Natural killer cell (primary cell): ENCODE measurements at regions of chr22 and their contacts with region 1.

Region 1: GRCh38 chr22:41403532-41404318 is 22.0 kb downstream of the TEF start:
- DNase-seq: peak; percentile 76 to 92
- ATAC-seq: peak; percentile 97 to 100 (median 100)
- H3K4me3 ChIP-seq: no peak overlapping the region
- H3K4me3 Mint-ChIP-seq: no peak overlapping the region
- H3K27ac ChIP-seq: no peak overlapping the region
- H3K27ac Mint-ChIP-seq: no peak overlapping the region
- H3K4me1 ChIP-seq: peaks cover 7% of the 10 kb centered on the region
- H3K4me1 Mint-ChIP-seq: peaks cover 5% of the 10 kb centered on the region in 2 donors
- H3K27me3 ChIP-seq: no peaks in the 10 kb centered on the region
- H3K27me3 Mint-ChIP-seq: peaks cover 0 to 2% of the 10 kb centered on the region in 2 donors
- CTCF ChIP-seq: peak; percentile 90

Region 2: GRCh38 chr22:41256254-41256897 is 147.3 kb before region 1 on chr22:
- intact Hi-C with region 1: no loop called
- DNase-seq: no peak
- ATAC-seq: no peak
- H3K4me3 ChIP-seq: no peak overlapping the region
- H3K4me3 Mint-ChIP-seq: no peak overlapping the region
- H3K27ac ChIP-seq: no peak overlapping the region
- H3K27ac Mint-ChIP-seq: no peak overlapping the region
- H3K4me1 ChIP-seq: no peaks in the 10 kb centered on the region
- H3K4me1 Mint-ChIP-seq: no peaks in the 10 kb centered on the region
- H3K27me3 ChIP-seq: no peaks in the 10 kb centered on the region
- H3K27me3 Mint-ChIP-seq: no peaks in the 10 kb centered on the region
- CTCF ChIP-seq: no peak

Region 3: DNA sequence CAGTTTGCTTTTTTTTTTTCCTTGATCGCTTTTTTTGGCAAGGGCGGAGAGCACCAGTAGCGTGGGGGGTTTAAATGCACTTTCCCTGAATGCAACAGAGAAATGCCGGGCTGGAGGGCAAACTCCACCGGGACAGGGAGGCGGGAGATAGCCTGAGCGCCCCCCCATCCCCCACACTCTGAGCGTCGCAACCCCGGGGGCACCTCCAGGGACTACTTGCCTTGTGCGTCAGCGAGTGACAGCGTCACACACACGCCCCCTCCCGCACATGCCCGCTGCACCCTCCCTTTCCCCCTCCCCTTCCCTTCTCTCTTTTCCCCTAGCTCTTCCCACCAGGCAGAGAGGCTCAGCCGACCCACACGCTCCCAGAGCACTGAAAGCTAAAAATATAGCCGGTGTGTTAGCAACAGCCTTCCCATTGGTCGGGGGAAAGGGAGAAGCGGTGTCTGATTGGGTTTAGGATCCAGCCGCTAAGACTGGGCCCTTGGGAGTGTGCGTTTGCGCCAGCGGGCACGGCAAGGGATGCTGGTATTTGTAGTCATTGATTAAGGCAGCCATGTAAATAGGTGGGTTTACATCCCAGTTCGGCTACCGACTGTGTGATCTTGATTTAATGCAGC is 44.6 kb after region 1 on chr22:
- intact Hi-C with region 1: loop called (anchors 2 kb)
- DNase-seq: peak; percentile 81 to 96
- ATAC-seq: peak; percentile 62 to 81 (median 70)
- H3K4me3 ChIP-seq: peak overlapping the region; percentile 91
- H3K4me3 Mint-ChIP-seq: peak overlapping the region; percentile 93
- H3K27ac ChIP-seq: peak overlapping the region; percentile 100
- H3K27ac Mint-ChIP-seq: peak overlapping the region; percentile 93 to 99
- H3K4me1 ChIP-seq: peaks cover 31% of the 10 kb centered on the region
- H3K4me1 Mint-ChIP-seq: peaks cover 30 to 41% of the 10 kb centered on the region in 2 donors
- H3K27me3 ChIP-seq: no peaks in the 10 kb centered on the region
- H3K27me3 Mint-ChIP-seq: no peaks in the 10 kb centered on the region
- CTCF ChIP-seq: no peak

Region 4: GRCh38 chr22:41526837-41527799 is 123.4 kb after region 1 on chr22:
- intact Hi-C with region 1: loop called (anchors 1 kb)
- DNase-seq: peak; percentile 62 to 83
- ATAC-seq: peak; percentile 69 to 87 (median 76)
- H3K4me3 ChIP-seq: no peak overlapping the region
- H3K4me3 Mint-ChIP-seq: no peak overlapping the region
- H3K27ac ChIP-seq: no peak overlapping the region
- H3K27ac Mint-ChIP-seq: peak overlapping the region in 1 of 2 donors; percentile 47
- H3K4me1 ChIP-seq: peaks cover 11% of the 10 kb centered on the region
- H3K4me1 Mint-ChIP-seq: peaks cover 0 to 17% of the 10 kb centered on the region in 2 donors
- H3K27me3 ChIP-seq: no peaks in the 10 kb centered on the region
- H3K27me3 Mint-ChIP-seq: no peaks in the 10 kb centered on the region
- CTCF ChIP-seq: peak; percentile 85

Region 5: GRCh38 chr22:41532908-41533825 is 129.4 kb after region 1 on chr22:
- intact Hi-C with region 1: loop called (anchors 1 kb)
- DNase-seq: peak; percentile 59 to 81
- ATAC-seq: peak; percentile 71 to 89 (median 81)
- H3K4me3 ChIP-seq: no peak overlapping the region
- H3K4me3 Mint-ChIP-seq: no peak overlapping the region
- H3K27ac ChIP-seq: no peak overlapping the region
- H3K27ac Mint-ChIP-seq: no peak overlapping the region
- H3K4me1 ChIP-seq: peaks cover 8% of the 10 kb centered on the region
- H3K4me1 Mint-ChIP-seq: no peaks in the 10 kb centered on the region
- H3K27me3 ChIP-seq: no peaks in the 10 kb centered on the region
- H3K27me3 Mint-ChIP-seq: no peaks in the 10 kb centered on the region
- CTCF ChIP-seq: peak; percentile 68

Region 6: GRCh38 chr22:41596776-41597634 is 193.3 kb after region 1 on chr22:
- intact Hi-C with region 1: loop called (anchors 2 kb)
- DNase-seq: peak; percentile 33 to 61
- ATAC-seq: peak; percentile 71 to 82 (median 79)
- H3K4me3 ChIP-seq: no peak overlapping the region
- H3K4me3 Mint-ChIP-seq: no peak overlapping the region
- H3K27ac ChIP-seq: no peak overlapping the region
- H3K27ac Mint-ChIP-seq: no peak overlapping the region
- H3K4me1 ChIP-seq: peaks cover 7% of the 10 kb centered on the region
- H3K4me1 Mint-ChIP-seq: peaks cover 0 to 14% of the 10 kb centered on the region in 2 donors
- H3K27me3 ChIP-seq: peaks cover 11% of the 10 kb centered on the region
- H3K27me3 Mint-ChIP-seq: peaks cover 6 to 28% of the 10 kb centered on the region in 2 donors
- CTCF ChIP-seq: no peak